AG04450 (cell line): ENCODE measurements at regions of chr19 and their contacts with region 1.

Region 1: GRCh38 chr19:4636151-4636717 is 3.1 kb upstream of the TNFAIP8L1 start:
- DNase-seq: no peak
- H3K4me3 ChIP-seq: peak overlapping the region; percentile 56
- H3K27ac ChIP-seq: no peak overlapping the region
- H3K27me3 ChIP-seq: no peaks in the 10 kb centered on the region
- CTCF ChIP-seq: peak; percentile 73

Region 2: GRCh38 chr19:4524808-4525562 is 111.2 kb before region 1 on chr19:
- CTCF ChIA-PET with region 1: interaction called, 13 read pairs
- POLR2A ChIA-PET with region 1: interaction called, 3 read pairs
- DNase-seq: no peak
- H3K4me3 ChIP-seq: no peak overlapping the region
- H3K27ac ChIP-seq: no peak overlapping the region
- H3K27me3 ChIP-seq: peaks cover 8% of the 10 kb centered on the region
- CTCF ChIP-seq: peak; percentile 77

Region 3: GRCh38 chr19:4547303-4548237 is 88.7 kb before region 1 on chr19:
- CTCF ChIA-PET with region 1: interaction called, 10 read pairs
- POLR2A ChIA-PET with region 1: interaction called, 4 read pairs
- DNase-seq: no peak
- H3K4me3 ChIP-seq: no peak overlapping the region
- H3K27ac ChIP-seq: no peak overlapping the region
- H3K27me3 ChIP-seq: no peaks in the 10 kb centered on the region
- CTCF ChIP-seq: peak; percentile 33; the same call in 1 of the 2 replicates

Region 4: GRCh38 chr19:4557971-4558941 is 78.0 kb before region 1 on chr19:
- CTCF ChIA-PET with region 1: interaction called, 20 read pairs
- POLR2A ChIA-PET with region 1: interaction called, 3 read pairs
- DNase-seq: no peak
- H3K4me3 ChIP-seq: no peak overlapping the region
- H3K27ac ChIP-seq: no peak overlapping the region
- H3K27me3 ChIP-seq: no peaks in the 10 kb centered on the region
- CTCF ChIP-seq: peak; percentile 98

Region 5: DNA sequence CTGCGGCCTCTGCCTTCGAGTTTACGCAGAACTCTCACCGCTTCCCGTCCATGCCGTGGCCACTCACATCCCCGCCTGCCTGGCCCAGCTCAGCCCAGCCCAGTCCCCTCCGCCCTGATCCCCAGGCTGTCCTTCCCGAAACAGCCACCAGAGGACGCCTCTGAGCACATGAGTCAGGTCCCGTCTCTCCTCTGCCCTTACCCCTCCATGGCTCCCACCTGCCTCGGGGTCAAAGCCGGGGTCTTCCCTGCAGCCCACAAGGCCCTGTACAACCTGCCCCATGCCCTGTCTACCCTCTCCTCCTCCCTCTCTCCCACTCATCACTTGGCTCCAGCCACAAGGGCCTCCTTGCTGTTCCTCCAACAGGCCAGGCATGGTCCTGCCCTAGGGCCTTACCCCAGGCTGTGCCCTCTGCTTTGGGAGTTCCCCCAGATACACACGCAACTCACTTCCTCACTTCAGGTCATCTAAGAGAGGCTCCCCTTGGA is 68.6 kb before region 1 on chr19:
- CTCF ChIA-PET with region 1: interaction called, 56 read pairs
- POLR2A ChIA-PET with region 1: interaction called, 4 read pairs
- DNase-seq: no peak
- H3K4me3 ChIP-seq: no peak overlapping the region
- H3K27ac ChIP-seq: no peak overlapping the region
- H3K27me3 ChIP-seq: no peaks in the 10 kb centered on the region
- CTCF ChIP-seq: peak; percentile 78

Region 6: GRCh38 chr19:4576016-4576933 is 60.0 kb before region 1 on chr19:
- CTCF ChIA-PET with region 1: interaction called, 20 read pairs
- POLR2A ChIA-PET with region 1: interaction called, 4 read pairs
- DNase-seq: no peak
- H3K4me3 ChIP-seq: no peak overlapping the region
- H3K27ac ChIP-seq: peak overlapping the region; percentile 61
- H3K27me3 ChIP-seq: peaks cover 24% of the 10 kb centered on the region
- CTCF ChIP-seq: peak; percentile 70

Region 7: GRCh38 chr19:4620675-4621074 is 15.6 kb before region 1 on chr19:
- CTCF ChIA-PET with region 1: interaction called, 15 read pairs
- POLR2A ChIA-PET with region 1: interaction called, 4 read pairs
- DNase-seq: no peak
- H3K4me3 ChIP-seq: no peak overlapping the region
- H3K27ac ChIP-seq: no peak overlapping the region
- H3K27me3 ChIP-seq: peaks cover 32% of the 10 kb centered on the region
- CTCF ChIP-seq: no peak

Region 8: GRCh38 chr19:4733755-4734345 is 97.6 kb after region 1 on chr19:
- CTCF ChIA-PET with region 1: no interaction called
- POLR2A ChIA-PET with region 1: no interaction called
- DNase-seq: no peak
- H3K4me3 ChIP-seq: no peak overlapping the region
- H3K27ac ChIP-seq: no peak overlapping the region
- H3K27me3 ChIP-seq: peaks cover 9% of the 10 kb centered on the region
- CTCF ChIP-seq: no peak